HEK293T (cell line): ENCODE measurements at regions of chr4 and their contacts with region 1.

Region 1: DNA sequence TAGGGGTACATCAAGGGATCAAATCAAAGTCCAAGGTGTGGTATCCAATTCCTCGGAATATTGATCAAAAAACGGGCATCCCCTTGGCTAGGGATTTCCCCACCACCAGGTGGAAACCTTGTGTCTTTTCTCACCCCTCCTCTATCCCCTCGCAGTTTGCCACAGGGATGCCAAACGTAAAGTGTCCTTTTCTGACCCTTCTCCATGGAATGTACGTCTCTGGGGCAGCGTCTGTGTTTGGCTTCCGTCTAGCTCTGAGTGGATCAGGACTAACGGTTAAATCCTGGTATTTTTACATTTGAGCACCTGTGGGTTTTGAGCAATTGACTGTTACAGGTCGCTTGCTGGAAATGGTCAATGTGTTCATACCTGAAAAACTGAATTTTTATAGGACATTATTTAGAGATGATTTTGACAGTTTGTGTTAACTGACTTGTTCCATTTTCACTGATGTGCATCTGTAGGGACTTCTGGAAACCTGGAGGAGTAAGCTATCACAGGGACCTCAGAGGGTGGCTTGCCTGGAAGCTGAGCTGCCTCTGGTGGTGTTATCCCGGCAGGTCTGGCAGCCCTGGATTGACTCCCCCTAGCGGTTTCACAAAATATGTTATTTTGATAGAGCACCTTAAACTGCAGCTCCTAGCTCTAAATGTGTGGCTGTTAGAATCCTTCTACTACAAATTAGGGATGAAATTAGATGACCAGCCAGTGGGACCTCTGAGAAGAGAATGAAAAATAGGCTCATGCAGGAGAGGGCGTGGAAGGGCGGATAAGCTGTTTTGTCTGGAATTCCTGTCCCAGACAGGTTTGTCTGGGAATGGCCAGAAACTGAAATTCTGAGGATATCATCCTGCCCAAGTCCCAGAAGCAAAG is 8.8 kb upstream of the MGST2 start:
- DNase-seq: peak; percentile 81

Region 2: DNA sequence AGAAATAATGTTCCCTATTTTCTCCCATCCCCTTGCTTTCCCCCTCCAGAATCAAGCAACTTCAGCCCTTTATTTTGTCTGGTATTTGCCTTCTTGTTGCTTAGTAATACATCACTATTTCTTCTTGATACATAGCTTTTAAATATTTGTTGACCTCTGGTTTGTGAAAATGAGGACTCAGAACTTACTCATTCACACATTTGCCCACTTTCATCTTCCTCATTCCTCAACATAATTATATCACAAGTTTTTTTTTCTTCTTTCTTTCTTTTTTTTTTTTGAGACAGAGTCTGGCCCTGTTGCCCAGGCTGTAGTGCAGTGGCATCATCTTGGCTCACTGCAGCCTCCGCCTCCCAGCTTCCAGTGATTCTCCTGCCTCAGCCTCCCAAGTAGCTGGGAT is 325.7 kb before region 1 on chr4:
- CTCF ChIA-PET with region 1: no interaction called
- POLR2A ChIA-PET with region 1: no interaction called
- DNase-seq: no peak

Region 3: DNA sequence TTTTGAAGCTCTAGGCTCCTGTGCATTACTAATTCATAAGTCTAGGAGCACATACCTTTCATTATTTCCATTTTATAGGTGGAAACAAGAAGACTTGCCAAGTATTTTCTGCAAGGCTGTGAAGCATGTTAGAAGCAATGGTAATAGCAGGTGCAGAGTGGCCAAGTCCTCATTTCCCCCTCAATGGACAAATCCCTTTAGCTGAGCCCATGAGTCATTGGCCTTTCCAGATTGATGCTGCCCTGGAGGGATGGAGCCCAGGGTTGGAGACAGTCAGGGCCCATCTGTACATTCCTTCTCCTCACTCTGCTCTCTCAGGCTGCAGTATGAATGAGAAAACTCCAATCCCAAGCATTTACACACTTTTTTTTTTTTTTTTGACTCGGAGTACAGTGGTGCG is 15.4 kb after region 1 on chr4:
- CTCF ChIA-PET with region 1: interaction called, 33 read pairs
- POLR2A ChIA-PET with region 1: no interaction called
- DNase-seq: no peak

Region 4: DNA sequence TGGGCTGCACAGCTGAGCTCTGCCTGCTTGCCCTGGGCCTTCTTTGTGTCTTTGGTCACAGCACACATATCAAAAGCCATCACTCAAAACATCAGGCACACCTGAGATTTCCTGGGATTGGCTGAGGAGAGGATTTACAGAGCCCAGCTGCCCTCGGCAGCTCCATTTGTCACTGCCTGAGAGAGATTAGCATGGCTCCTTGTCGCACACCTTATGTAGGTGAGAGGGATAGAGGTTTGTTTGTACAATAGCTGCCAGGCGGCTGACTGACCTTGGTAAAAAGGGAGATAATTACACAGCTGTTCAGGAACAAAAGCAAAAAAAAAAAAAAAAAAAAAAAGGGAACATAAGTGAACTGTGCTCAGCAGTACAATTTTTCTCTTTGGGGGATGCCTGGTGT is 72.0 kb after region 1 on chr4:
- CTCF ChIA-PET with region 1: interaction called, 11 read pairs
- POLR2A ChIA-PET with region 1: no interaction called
- DNase-seq: no peak

Region 5: GRCh38 chr4:139783741-139784484 is 127.1 kb after region 1 on chr4:
- CTCF ChIA-PET with region 1: no interaction called
- POLR2A ChIA-PET with region 1: no interaction called
- DNase-seq: no peak